Caco-2 (cell line): ENCODE measurements at regions of chr11 and their contacts with region 1.

Region 1: GRCh38 chr11:94762208-94762607 is 5.9 kb upstream of the AMOTL1 start:
- DNase-seq: peak in 1 of 2 experiments; percentile 58
- H3K4me3 ChIP-seq: no peak overlapping the region
- H3K4me3 Mint-ChIP-seq: no peak overlapping the region
- H3K27ac Mint-ChIP-seq: no peak overlapping the region
- H3K4me1 ChIP-seq: peaks cover 31% of the 10 kb centered on the region
- H3K4me1 Mint-ChIP-seq: peaks cover 12% of the 10 kb centered on the region
- H3K27me3 ChIP-seq: no peaks in the 10 kb centered on the region
- H3K27me3 Mint-ChIP-seq: no peaks in the 10 kb centered on the region
- CTCF ChIP-seq: peak; percentile 49 to 73

Region 2: DNA sequence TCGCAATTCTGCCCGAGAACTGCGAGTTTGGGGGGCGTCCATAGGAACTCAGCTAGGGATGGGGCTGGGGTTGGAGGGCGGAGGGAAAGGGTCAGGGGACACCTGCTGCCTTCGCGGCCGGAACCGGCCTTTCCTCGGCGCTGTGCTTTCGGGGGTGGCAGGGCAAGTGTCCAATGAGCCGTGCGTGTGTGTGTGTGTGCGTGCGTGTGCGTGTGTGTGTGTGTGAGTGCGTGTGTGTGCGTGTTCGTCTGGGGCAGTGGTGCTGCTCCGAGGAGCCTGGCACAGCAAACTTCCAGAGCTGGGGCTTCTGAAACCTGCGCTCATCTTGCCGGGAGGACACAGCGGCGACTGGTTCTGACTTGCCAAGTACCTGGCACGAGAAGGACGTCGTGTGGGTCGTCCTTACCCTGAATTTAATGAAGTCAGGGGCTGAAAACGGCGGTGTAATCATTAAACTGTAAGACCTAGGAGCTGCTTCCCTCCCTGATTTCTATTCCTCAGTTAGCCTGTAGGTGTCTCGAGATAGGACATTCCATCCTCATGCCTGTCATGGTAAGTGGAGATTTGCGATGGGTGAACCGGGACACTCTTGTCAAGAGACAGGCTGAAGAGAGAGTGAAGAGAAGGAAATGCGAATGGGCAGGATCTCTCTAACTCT is 21.1 kb before region 1 on chr11:
- CTCF ChIA-PET with region 1: interaction called, 4 read pairs
- POLR2A ChIA-PET with region 1: no interaction called
- intact Hi-C with region 1: loop called (anchors 1 kb)
- DNase-seq: peak; percentile 64 to 69
- H3K4me3 ChIP-seq: no peak overlapping the region
- H3K4me3 Mint-ChIP-seq: no peak overlapping the region
- H3K27ac Mint-ChIP-seq: peak overlapping the region; percentile 48
- H3K4me1 ChIP-seq: peaks cover 54% of the 10 kb centered on the region
- H3K4me1 Mint-ChIP-seq: peaks cover 15% of the 10 kb centered on the region
- H3K27me3 ChIP-seq: no peaks in the 10 kb centered on the region
- H3K27me3 Mint-ChIP-seq: no peaks in the 10 kb centered on the region
- CTCF ChIP-seq: peak; percentile 49 to 64